Heart right ventricle (tissue), 16 donors: ENCODE measurements at regions of chr17 and their contacts with region 1.

Region 1: DNA sequence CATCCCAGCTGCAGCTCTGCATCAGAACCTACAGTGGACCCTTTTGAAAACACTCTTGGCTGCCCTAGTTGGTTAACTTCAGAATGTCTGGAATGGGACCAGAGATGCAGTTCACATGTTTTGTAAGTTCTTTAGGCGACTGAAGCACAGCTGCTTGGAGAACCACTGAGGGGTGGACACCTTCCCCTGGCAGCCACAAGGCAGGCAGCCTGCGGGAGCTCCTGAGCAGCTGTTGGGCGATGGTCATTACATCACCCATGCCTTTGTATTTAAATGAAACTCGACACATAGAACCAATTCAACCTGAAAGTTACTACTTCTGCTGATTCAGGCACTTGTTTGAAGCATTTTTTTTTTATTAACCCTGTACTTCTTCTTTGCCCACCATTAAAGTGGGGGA is 151.5 kb downstream of the LGALS9B start:
- DNase-seq: no peak
- ATAC-seq: no peak
- H3K4me3 ChIP-seq: no peak overlapping the region
- H3K27ac ChIP-seq: no peak overlapping the region
- H3K4me1 ChIP-seq: peaks cover 0 to 6% (median 0%) of the 10 kb centered on the region in 9 donors
- H3K27me3 ChIP-seq: no peaks in the 10 kb centered on the region
- CTCF ChIP-seq: no peak

Region 2: GRCh38 chr17:19979917-19980770 is 335.7 kb before region 1 on chr17:
- intact Hi-C with region 1: loop called in 1 of 10 experiments (anchors 10 kb)
- DNase-seq: peak; percentile 15 to 65
- ATAC-seq: peak in 3 of 8 donors; percentile 29 to 46 (median 38)
- H3K4me3 ChIP-seq: peak overlapping the region in 2 of 10 donors; percentile 18 to 27
- H3K27ac ChIP-seq: peak overlapping the region in 4 of 10 donors; percentile 7 to 95 (median 26)
- H3K4me1 ChIP-seq: peaks cover 0 to 43% (median 29%) of the 10 kb centered on the region in 9 donors
- H3K27me3 ChIP-seq: no peaks in the 10 kb centered on the region
- CTCF ChIP-seq: no peak

Region 3: DNA sequence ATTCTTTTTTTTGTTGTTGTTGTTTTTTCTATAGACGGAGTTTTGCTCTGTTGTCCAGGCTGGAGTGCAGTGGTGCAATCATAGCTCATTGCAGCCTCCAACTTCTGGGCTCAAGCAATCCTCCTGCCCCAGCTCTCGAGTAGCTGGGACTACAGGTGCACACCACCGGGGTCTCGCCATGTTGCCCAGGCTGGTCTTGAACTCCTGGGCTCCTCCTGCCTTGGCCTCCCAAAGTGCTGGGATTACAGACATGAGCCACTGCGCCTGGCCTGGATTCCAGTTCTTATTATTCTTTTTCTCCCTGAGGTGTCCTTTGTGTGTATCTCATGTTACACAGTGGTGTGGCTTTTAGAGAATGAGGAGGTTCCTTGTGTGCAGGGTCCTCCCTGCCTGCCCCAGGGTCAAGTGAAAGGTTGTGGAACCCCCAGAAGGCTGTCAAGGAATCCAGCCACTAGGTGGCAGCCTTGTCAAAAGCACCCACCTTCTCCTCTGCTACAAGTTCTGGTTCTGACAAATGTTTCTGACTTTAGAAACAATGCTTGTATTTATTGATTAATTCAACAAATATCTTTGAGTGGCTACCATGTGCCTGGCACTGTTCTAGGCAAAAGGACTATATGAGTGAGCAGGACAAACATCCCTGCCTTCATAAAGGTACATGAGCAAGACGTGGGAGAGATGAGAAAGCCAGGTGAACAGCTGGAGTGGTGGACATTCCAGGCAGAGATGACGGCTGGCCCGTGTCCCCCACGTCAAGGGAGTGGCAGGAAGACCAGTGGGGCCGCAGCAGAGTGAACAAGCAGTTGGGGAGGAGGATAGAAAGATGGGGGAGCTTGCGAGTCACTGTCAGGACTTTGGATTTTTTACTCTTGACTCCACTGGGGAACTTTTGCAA is 194.2 kb before region 1 on chr17:
- intact Hi-C with region 1: loop called in 9 of 10 experiments (anchors 5 kb)
- DNase-seq: peak; percentile 47 to 61
- ATAC-seq: peak in 7 of 8 donors; percentile 27 to 78 (median 68)
- H3K4me3 ChIP-seq: no peak overlapping the region
- H3K27ac ChIP-seq: peak overlapping the region in 1 of 10 donors; percentile 18
- H3K4me1 ChIP-seq: peaks cover 0 to 24% (median 10%) of the 10 kb centered on the region in 9 donors
- H3K27me3 ChIP-seq: peaks cover 0 to 7% (median 0%) of the 10 kb centered on the region in 7 donors
- CTCF ChIP-seq: peak; percentile 65 to 94 (median 88)

Region 4: DNA sequence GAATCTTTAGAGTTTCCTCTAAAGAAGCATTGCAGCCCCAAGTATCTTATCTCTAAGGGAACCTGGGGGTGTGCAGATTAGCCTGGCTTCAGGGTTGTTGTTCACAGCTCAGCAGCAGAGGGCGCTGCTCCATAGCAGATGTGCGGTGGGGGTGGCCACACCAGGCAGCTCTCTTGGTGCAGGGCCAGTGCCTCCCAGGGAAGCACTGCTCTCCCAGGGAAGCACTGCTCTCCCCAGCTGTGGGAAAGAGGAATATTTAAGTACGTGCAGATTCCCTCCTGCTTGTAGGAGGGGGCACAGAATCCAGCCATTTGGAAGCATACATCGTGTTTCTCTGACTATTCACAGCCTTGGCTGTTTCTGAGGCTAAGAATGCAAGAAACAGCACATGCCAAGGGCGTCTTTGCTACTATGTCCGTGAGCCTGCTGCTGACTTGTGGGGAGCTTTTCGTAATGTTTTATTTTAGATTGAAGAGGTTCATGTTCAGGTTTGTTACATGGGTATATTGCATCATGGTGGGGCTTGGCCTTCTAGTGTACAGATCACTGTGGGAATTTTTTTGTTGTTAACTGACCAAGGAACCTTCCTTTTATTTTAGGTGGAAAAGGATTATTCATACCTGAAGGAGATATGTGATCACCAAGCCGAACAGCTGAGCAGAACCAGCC is 88.9 kb before region 1 on chr17:
- intact Hi-C with region 1: loop called in 8 of 10 experiments (anchors 5 to 10 kb)
- DNase-seq: peak; percentile 76 to 84
- ATAC-seq: peak; percentile 86 to 98 (median 96)
- H3K4me3 ChIP-seq: no peak overlapping the region
- H3K27ac ChIP-seq: no peak overlapping the region
- H3K4me1 ChIP-seq: peaks cover 0 to 13% (median 0%) of the 10 kb centered on the region in 9 donors
- H3K27me3 ChIP-seq: no peaks in the 10 kb centered on the region
- CTCF ChIP-seq: peak; percentile 56 to 89 (median 81)

Region 5: DNA sequence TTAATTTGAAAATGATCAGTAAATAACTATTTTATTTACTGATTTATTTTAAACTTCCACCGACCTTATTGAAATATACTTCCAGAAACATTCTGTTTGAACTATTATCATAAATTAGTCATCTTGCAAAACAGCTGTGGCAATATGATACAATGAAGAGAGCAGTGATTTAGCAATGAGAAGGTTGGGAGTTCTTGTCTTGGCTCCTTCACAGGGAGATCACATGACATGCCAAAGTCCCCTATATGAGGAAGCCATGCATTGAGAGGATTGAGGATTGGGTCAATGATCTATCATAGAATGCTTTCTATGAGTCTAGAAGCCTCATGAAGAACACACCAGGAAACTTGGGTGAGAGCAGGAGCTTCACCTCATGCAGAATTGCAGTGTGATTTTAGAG is 71.2 kb before region 1 on chr17:
- intact Hi-C with region 1: loop called in 2 of 10 experiments (anchors 5 to 10 kb)
- DNase-seq: no peak
- ATAC-seq: no peak
- H3K4me3 ChIP-seq: no peak overlapping the region
- H3K27ac ChIP-seq: no peak overlapping the region
- H3K4me1 ChIP-seq: no peaks in the 10 kb centered on the region
- H3K27me3 ChIP-seq: no peaks in the 10 kb centered on the region
- CTCF ChIP-seq: no peak